Panc1 (cell line): ENCODE measurements at regions of chr10 and their contacts with region 1.

Region 1: GRCh38 chr10:100743626-100744135 is 1.7 kb upstream of the PAX2 start:
- DNase-seq: no peak
- ATAC-seq: peak; percentile 49
- H3K4me3 ChIP-seq: peak overlapping the region; percentile 58 to 67
- H3K27ac ChIP-seq: peak overlapping the region; percentile 99
- H3K4me1 ChIP-seq: peaks cover 44% of the 10 kb centered on the region
- H3K27me3 ChIP-seq: no peaks in the 10 kb centered on the region
- CTCF ChIP-seq: peak; percentile 97

Region 2: GRCh38 chr10:100535715-100536353 is 207.8 kb before region 1 on chr10 and contains the start of gene HIF1AN:
- CTCF ChIA-PET with region 1: interaction called, 12 read pairs
- POLR2A ChIA-PET with region 1: interaction called, 7 read pairs
- in situ Hi-C with region 1: no loop called
- intact Hi-C with region 1: no loop called
- DNase-seq: peak; percentile 84
- ATAC-seq: peak; percentile 98
- H3K4me3 ChIP-seq: peak within 1 kb of the TSS; percentile 76 to 83
- H3K27ac ChIP-seq: peak within 1 kb of the TSS; percentile 90
- H3K4me1 ChIP-seq: peaks cover 25% of the 10 kb centered on the region
- H3K27me3 ChIP-seq: no peaks in the 10 kb centered on the region
- CTCF ChIP-seq: peak; percentile 99
- total RNA-seq, gene HIF1AN: 83.1 TPM

Region 3: DNA sequence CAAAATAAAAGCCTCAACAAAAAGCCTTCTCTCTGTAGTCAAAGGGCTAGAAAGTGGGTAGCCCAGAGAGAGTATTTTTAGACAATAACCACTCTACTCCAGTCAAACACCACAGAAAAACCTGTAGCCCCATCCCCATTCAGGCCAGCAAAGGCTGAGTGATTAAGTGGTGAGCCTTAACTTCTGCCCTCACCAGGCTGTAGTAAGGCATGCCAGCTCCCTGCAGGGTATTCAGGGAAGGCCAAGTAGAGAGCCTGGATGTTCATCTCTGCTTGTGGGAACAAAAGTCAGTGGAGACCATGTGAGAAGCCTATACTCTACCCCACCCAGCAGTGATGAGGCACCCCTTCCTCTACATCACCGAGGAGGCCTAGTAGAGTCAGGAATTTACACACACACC is 156.7 kb before region 1 on chr10:
- CTCF ChIA-PET with region 1: no interaction called
- POLR2A ChIA-PET with region 1: no interaction called
- in situ Hi-C with region 1: no loop called
- intact Hi-C with region 1: no loop called
- DNase-seq: no peak
- ATAC-seq: no peak
- H3K4me3 ChIP-seq: no peak overlapping the region
- H3K27ac ChIP-seq: no peak overlapping the region
- H3K4me1 ChIP-seq: no peaks in the 10 kb centered on the region
- H3K27me3 ChIP-seq: peaks cover 38% of the 10 kb centered on the region
- CTCF ChIP-seq: no peak

Region 4: GRCh38 chr10:100670828-100671479 is 72.7 kb before region 1 on chr10:
- CTCF ChIA-PET with region 1: no interaction called
- POLR2A ChIA-PET with region 1: no interaction called
- in situ Hi-C with region 1: no loop called
- intact Hi-C with region 1: loop called (anchors 5 kb)
- DNase-seq: no peak
- ATAC-seq: peak; percentile 92
- H3K4me3 ChIP-seq: peak overlapping the region; percentile 29 to 37
- H3K27ac ChIP-seq: no peak overlapping the region
- H3K4me1 ChIP-seq: peaks cover 3% of the 10 kb centered on the region; the same call in 1 of the 2 replicates
- H3K27me3 ChIP-seq: peaks cover 23% of the 10 kb centered on the region
- CTCF ChIP-seq: peak; percentile 100

Region 5: GRCh38 chr10:100728928-100729861 is 14.5 kb before region 1 on chr10:
- CTCF ChIA-PET with region 1: interaction called, 17 read pairs
- POLR2A ChIA-PET with region 1: interaction called, 8 read pairs
- in situ Hi-C with region 1: no loop called
- intact Hi-C with region 1: no loop called
- DNase-seq: no peak
- ATAC-seq: peak; percentile 76
- H3K4me3 ChIP-seq: peak overlapping the region; percentile 52 to 79
- H3K27ac ChIP-seq: peak overlapping the region; percentile 99
- H3K4me1 ChIP-seq: peaks cover 40% of the 10 kb centered on the region
- H3K27me3 ChIP-seq: no peaks in the 10 kb centered on the region
- CTCF ChIP-seq: peak; percentile 95

Region 6: GRCh38 chr10:100878291-100878910 is 134.7 kb after region 1 on chr10:
- CTCF ChIA-PET with region 1: interaction called, 18 read pairs
- POLR2A ChIA-PET with region 1: no interaction called
- in situ Hi-C with region 1: no loop called
- intact Hi-C with region 1: loop called (anchors 5 kb)
- DNase-seq: peak; percentile 48
- ATAC-seq: peak; percentile 95
- H3K4me3 ChIP-seq: no peak overlapping the region
- H3K27ac ChIP-seq: no peak overlapping the region
- H3K4me1 ChIP-seq: no peaks in the 10 kb centered on the region
- H3K27me3 ChIP-seq: no peaks in the 10 kb centered on the region
- CTCF ChIP-seq: peak; percentile 90

Region 7: DNA sequence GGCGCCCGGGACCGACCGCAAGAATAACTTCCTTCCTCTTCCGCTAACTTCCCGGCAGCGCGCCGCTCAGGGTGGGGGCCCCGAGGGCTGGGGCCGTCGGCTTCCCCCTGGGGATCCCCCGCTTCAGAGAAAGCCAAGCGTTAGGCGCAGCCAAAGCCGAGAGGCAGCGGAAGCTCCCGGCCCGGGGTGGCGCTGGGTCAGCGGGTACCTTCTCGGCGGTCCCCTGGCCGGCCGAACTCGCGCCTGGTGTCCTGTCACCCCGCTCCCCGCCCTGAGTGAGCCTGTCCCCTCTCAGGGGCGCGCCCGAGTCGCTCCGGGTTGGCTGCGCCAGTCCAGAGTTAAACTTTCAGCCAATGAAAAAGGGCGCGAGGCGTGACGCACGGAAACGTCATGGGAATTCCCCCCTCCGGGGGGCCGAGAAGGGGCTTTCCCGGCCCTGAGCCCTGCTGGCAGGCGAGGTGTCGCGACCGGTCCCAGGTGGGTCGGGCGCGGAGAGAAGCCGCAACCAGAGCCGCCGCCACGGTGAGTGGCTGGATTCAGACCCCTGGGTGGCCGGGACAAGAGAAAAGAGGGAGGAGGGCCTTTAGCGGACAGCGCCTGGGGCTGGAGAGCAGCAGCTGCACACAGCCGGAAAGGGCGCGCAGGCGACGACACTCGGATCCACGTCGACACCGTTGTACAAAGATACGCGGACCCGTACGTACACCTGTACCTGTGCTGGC is 1650.6 kb after region 1 on chr10:
- CTCF ChIA-PET with region 1: no interaction called
- POLR2A ChIA-PET with region 1: interaction called, 13 read pairs
- in situ Hi-C with region 1: no loop called
- intact Hi-C with region 1: no loop called
- DNase-seq: peak; percentile 79
- ATAC-seq: peak; percentile 92
- H3K4me3 ChIP-seq: peak overlapping the region; percentile 67 to 89
- H3K27ac ChIP-seq: peak overlapping the region; percentile 63
- H3K4me1 ChIP-seq: peaks cover 23% of the 10 kb centered on the region
- H3K27me3 ChIP-seq: no peaks in the 10 kb centered on the region; the same call in 1 of the 2 replicates
- CTCF ChIP-seq: peak; percentile 86